B cell (primary cell): ENCODE measurements at regions of chr10 and their contacts with region 1.

Region 1: GRCh38 chr10:133373104-133373624 is at the start of gene ECHS1:
- DNase-seq: peak; percentile 92
- ATAC-seq: peak; percentile 96
- H3K4me3 ChIP-seq: peak within 1 kb of the TSS; percentile 53 to 74 (median 69)
- H3K4me3 Mint-ChIP-seq: peak within 1 kb of the TSS; percentile 87
- H3K27ac ChIP-seq: peak within 1 kb of the TSS; percentile 65 to 77
- H3K27ac Mint-ChIP-seq: peak within 1 kb of the TSS; percentile 84
- H3K4me1 ChIP-seq: peaks cover 15 to 27% of the 10 kb centered on the region in 2 donors
- H3K4me1 Mint-ChIP-seq: peaks cover 18% of the 10 kb centered on the region
- H3K27me3 ChIP-seq: no peaks in the 10 kb centered on the region
- H3K27me3 Mint-ChIP-seq: no peaks in the 10 kb centered on the region
- CTCF ChIP-seq: no peak
- total RNA-seq, gene ECHS1: 27.5 and 29.5 TPM in 2 replicates

Region 2: DNA sequence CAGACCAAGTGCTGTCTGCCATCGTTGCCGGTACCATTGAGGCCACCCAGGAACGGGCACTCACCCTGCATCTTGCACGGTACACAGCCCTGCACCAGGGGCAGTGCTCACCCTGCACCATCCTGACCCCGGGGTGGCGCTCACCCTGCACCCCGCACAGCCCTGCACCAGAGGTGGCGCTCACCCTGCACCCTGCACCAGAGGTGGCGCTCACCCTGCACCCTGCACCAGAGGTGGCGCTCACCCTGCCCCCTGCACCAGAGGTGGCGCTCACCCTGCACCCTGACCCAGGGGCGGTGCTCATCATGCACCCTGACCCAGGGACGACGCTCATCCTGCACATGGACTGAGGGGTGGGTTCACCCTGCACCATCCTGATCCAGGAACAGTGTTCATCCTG is 71.0 kb before region 1 on chr10:
- CTCF ChIA-PET with region 1: no interaction called
- POLR2A ChIA-PET with region 1: no interaction called
- intact Hi-C with region 1: no loop called
- DNase-seq: no peak
- ATAC-seq: no peak
- H3K4me3 ChIP-seq: no peak overlapping the region
- H3K4me3 Mint-ChIP-seq: no peak overlapping the region
- H3K27ac ChIP-seq: no peak overlapping the region
- H3K27ac Mint-ChIP-seq: no peak overlapping the region
- H3K4me1 ChIP-seq: peaks cover 13 to 21% of the 10 kb centered on the region in 2 donors
- H3K4me1 Mint-ChIP-seq: peaks cover 24% of the 10 kb centered on the region
- H3K27me3 ChIP-seq: no peaks in the 10 kb centered on the region
- H3K27me3 Mint-ChIP-seq: no peaks in the 10 kb centered on the region
- CTCF ChIP-seq: no peak

Region 3: GRCh38 chr10:133357285-133358151 is 15.6 kb before region 1 on chr10 and contains the start of gene FUOM:
- CTCF ChIA-PET with region 1: interaction called, 4 read pairs
- POLR2A ChIA-PET with region 1: interaction called, 7 read pairs
- intact Hi-C with region 1: loop called (anchors 1 kb)
- DNase-seq: peak; percentile 89
- ATAC-seq: peak; percentile 85
- H3K4me3 ChIP-seq: peak within 1 kb of the TSS in 4 of 5 experiments; percentile 57 to 87 (median 68)
- H3K4me3 Mint-ChIP-seq: peak within 1 kb of the TSS; percentile 80
- H3K27ac ChIP-seq: peak within 1 kb of the TSS in 1 of 2 donors; percentile 71
- H3K27ac Mint-ChIP-seq: peak within 1 kb of the TSS; percentile 26
- H3K4me1 ChIP-seq: peaks cover 20 to 39% of the 10 kb centered on the region in 2 donors
- H3K4me1 Mint-ChIP-seq: peaks cover 32% of the 10 kb centered on the region
- H3K27me3 ChIP-seq: no peaks in the 10 kb centered on the region
- H3K27me3 Mint-ChIP-seq: no peaks in the 10 kb centered on the region
- CTCF ChIP-seq: no peak
- total RNA-seq, gene FUOM: 20.7 and 23.8 TPM in 2 replicates